ENCODE measurements at regions of chr1 and their contacts with region 1.

Region 1: GRCh38 chr1:206556750-206557635 is 49.7 kb downstream of the RASSF5 start:
- DNase-seq: peak; percentile 86
- H3K4me3 Mint-ChIP-seq: peak overlapping the region; percentile 98
- H3K27ac Mint-ChIP-seq: peak overlapping the region; percentile 98
- H3K4me1 Mint-ChIP-seq: peaks cover 73% of the 10 kb centered on the region
- H3K27me3 Mint-ChIP-seq: no peaks in the 10 kb centered on the region

Region 2: DNA sequence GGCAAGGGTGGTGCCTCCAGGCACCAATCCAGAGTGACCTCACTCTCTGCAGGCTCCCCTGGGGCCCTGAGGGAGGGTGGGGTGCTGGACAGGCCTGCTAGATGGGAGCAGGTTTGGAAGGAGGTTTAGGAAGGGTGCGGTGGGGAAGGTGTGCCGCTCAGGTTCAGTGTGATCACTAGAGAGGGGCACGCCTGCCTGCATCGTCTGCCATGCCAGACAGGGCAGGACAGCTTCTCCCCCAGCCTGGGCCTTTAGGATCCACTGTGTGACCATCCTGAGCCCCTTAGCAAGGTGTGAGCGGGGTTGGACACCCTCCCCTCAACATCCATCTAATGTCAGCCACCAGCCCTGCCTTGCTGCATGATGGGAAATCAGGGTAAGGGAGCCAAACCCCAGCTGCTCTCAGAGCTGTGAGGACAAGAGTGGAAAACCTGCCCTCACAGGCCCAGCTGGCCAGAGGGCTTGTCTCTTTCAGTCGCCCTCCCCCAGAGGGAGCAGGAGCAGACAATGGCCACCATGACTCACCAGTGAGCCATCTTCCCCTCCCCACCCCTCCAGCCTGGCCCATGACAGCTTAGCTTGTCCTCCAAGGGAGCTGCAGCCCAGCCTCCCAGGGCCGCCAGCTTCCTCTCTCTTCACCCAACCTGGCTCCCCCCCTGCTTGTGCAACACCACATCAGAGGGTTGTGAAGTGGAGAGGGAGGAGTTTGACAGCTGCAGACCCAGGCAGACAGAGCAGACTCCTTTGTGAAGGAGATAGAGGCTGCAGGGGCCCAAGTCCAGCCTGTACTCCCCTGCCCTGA is 1272.4 kb before region 1 on chr1:
- intact Hi-C with region 1: loop called (anchors 10 kb)
- DNase-seq: peak; percentile 84
- H3K4me3 Mint-ChIP-seq: peak overlapping the region; percentile 64
- H3K27ac Mint-ChIP-seq: peak overlapping the region; percentile 90
- H3K4me1 Mint-ChIP-seq: peaks cover 75% of the 10 kb centered on the region
- H3K27me3 Mint-ChIP-seq: peaks cover 9% of the 10 kb centered on the region

Region 3: GRCh38 chr1:206544562-206545257 is 12.3 kb before region 1 on chr1:
- intact Hi-C with region 1: loop called (anchors 1 kb)
- DNase-seq: peak; percentile 69
- H3K4me3 Mint-ChIP-seq: no peak overlapping the region
- H3K27ac Mint-ChIP-seq: peak overlapping the region; percentile 22
- H3K4me1 Mint-ChIP-seq: peaks cover 33% of the 10 kb centered on the region
- H3K27me3 Mint-ChIP-seq: peaks cover 2% of the 10 kb centered on the region

Region 4: DNA sequence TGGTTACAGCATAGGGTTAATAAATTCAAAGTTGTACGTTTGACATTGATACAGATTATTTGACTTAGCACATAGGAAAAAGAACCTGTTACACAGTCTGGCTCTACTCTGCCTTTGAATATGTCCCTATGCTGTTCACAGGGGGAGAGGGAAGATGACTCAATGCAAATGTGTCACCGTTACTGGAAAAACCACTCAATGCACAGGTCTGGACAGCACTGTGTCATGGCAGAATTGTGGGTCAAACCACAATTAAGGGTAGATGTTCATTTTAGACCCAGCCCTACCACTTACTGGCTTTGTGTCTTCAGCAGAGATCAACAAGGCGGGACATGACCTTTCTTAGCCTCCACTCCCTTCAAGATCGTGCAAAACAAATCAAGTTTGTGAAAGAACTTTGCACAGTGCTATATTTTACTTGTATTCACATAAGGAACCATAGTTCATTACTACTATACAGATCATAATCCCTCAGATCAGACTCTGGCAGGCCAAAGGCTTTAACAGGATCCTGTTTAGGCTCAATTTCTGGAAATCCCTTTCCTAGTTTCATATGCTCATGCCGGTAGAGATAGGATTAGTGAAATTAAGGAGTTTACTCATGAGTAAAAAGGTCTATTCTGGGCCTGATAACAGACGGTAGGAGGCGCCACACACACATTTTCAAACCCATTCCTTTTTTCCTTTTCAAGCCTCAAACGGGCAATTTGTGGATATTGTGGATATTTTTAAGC is 33.2 kb after region 1 on chr1:
- intact Hi-C with region 1: loop called (anchors 5 kb)
- DNase-seq: peak; percentile 70
- H3K4me3 Mint-ChIP-seq: peak overlapping the region; percentile 65
- H3K27ac Mint-ChIP-seq: peak overlapping the region; percentile 95
- H3K4me1 Mint-ChIP-seq: peaks cover 87% of the 10 kb centered on the region
- H3K27me3 Mint-ChIP-seq: no peaks in the 10 kb centered on the region

Region 5: GRCh38 chr1:206684478-206685333 is 127.7 kb after region 1 on chr1 and contains the start of gene MAPKAPK2:
- intact Hi-C with region 1: loop called (anchors 2 kb)
- DNase-seq: peak; percentile 69
- H3K4me3 Mint-ChIP-seq: peak within 1 kb of the TSS; percentile 98
- H3K27ac Mint-ChIP-seq: peak within 1 kb of the TSS; percentile 96
- H3K4me1 Mint-ChIP-seq: peaks cover 72% of the 10 kb centered on the region
- H3K27me3 Mint-ChIP-seq: peaks cover 7% of the 10 kb centered on the region
- total RNA-seq, gene MAPKAPK2: 117 and 120 TPM in 2 replicates

Measured in activated T-helper 1 cell treated with anti-CD3 and anti-CD28 coated beads, Interleukin-12 subunit alpha, Interleukin-12 subunit beta, Interleukin-2, Interleukin-4 antibody, amounts not matched to agents 30 ng/mL and 10 ng/mL and 1 ng/mL, durations not matched to agents 14 hours and 24 hours and 36 hours (primary cell).